PC-3 (cell line): ENCODE measurements at regions of chr4 and their contacts with region 1.

Region 1: DNA sequence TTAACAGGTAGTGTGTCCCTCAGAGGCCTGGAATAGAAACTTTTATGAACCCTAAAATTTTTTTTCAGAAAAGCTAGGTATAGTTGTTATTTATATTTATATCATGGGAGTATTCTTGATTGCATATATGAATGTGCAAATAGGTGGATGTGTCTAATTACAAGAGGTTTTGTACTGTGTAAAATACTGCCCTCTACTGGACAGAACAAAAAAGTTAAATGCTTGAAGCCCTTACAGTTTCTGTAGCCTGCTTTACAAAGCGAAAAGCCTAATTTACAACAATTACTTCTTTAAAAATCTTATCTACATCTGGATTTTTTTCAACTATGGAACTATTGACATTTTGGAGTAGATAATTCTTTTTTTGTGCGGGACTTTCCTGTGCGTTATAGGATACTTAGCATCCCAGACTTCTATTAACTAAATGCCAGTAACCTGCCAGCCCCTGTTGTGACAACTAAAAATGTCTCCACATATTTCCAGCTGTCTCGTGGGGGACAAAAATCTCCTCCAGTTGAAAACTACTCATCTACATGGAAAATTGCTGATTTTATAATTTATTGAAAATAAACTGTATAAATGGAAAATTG is 35.1 kb downstream of the ENPEP start:
- DNase-seq: peak; percentile 70
- ATAC-seq: peak; percentile 59; the same call in 1 of the 2 replicates
- H3K4me3 ChIP-seq: no peak overlapping the region
- H3K27ac ChIP-seq: no peak overlapping the region
- H3K4me1 ChIP-seq: no peaks in the 10 kb centered on the region
- H3K27me3 ChIP-seq: no peaks in the 10 kb centered on the region
- CTCF ChIP-seq: peak; percentile 67

Region 2: DNA sequence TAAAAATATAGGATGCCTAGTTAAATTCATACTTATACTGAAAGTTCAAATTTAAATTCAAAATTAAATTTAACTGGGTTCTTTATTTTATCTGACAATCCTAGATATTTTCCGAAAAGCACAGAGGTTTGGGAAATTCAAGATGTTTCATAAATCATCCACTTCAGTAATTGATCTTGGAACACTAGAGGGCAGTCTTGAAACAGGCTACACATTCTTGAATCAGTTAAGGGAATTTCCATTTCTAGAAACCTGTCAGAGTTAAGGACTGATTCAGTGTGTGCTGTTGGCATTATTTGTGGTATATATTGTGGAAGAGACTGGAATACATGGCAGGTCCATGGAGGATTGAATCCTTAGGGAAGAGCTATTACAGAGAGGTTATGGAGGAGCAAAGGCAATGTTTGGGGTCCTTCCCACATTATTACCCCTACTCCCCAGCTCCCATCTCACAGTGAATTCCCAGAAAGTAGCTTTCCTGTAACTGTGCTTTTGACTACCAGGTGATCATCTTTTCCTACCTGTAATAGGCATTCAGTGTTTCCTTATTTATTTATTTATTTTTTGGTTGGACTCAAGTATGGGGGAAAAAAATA is 505.5 kb before region 1 on chr4:
- CTCF ChIA-PET with region 1: no interaction called
- POLR2A ChIA-PET with region 1: no interaction called
- intact Hi-C with region 1: loop called (anchors 1 kb)
- DNase-seq: peak; percentile 72
- ATAC-seq: peak; percentile 57
- H3K4me3 ChIP-seq: no peak overlapping the region
- H3K27ac ChIP-seq: no peak overlapping the region
- H3K4me1 ChIP-seq: no peaks in the 10 kb centered on the region
- H3K27me3 ChIP-seq: no peaks in the 10 kb centered on the region
- CTCF ChIP-seq: peak; percentile 79

Region 3: DNA sequence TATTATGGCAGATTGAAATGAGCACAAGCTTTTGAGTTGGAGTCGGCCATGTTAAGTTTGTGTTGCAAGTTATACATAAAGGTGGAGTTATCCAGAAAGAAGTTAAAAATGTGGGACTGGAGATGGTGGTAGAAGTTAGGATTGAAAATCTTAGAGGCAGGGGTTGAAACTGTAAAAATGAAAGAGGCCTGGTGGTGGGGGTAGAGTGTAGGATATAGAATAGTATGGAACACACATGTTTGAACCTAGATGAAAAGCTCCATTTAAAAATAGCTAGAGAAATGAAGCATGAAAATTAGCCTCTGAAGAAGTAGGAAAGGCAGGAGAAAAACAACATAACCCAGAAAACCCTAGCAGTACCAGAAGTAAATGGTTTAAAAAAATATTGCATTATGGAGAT is 166.9 kb before region 1 on chr4:
- CTCF ChIA-PET with region 1: interaction called, 9 read pairs
- POLR2A ChIA-PET with region 1: no interaction called
- intact Hi-C with region 1: loop called (anchors 1 kb)
- DNase-seq: peak; percentile 52
- ATAC-seq: no peak
- H3K4me3 ChIP-seq: no peak overlapping the region
- H3K27ac ChIP-seq: no peak overlapping the region
- H3K4me1 ChIP-seq: no peaks in the 10 kb centered on the region
- H3K27me3 ChIP-seq: no peaks in the 10 kb centered on the region
- CTCF ChIP-seq: peak; percentile 60; the same call in 1 of the 2 replicates

Region 4: DNA sequence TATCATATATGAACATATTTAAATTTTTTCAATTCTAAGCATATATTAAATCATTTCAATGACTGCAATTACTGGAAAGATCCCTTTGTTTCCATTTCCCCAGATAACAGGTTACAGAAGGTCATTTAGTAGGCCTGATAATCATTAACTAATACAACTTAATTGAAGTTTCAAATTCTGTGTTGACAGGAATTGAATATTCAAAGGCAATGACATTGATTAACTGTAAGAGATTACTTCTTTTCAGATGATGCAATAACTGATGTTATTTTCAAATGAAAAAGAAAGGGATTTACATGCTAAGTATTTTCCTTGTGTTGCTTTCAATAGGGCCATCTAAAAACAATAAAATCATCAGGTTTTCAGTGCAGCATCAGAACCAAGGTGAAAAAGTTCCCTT is 116.2 kb before region 1 on chr4:
- CTCF ChIA-PET with region 1: no interaction called
- POLR2A ChIA-PET with region 1: no interaction called
- intact Hi-C with region 1: no loop called
- DNase-seq: no peak
- ATAC-seq: no peak
- H3K4me3 ChIP-seq: no peak overlapping the region
- H3K27ac ChIP-seq: no peak overlapping the region
- H3K4me1 ChIP-seq: no peaks in the 10 kb centered on the region
- H3K27me3 ChIP-seq: peaks cover 7% of the 10 kb centered on the region; the same call in 1 of the 2 replicates
- CTCF ChIP-seq: no peak

Region 5: DNA sequence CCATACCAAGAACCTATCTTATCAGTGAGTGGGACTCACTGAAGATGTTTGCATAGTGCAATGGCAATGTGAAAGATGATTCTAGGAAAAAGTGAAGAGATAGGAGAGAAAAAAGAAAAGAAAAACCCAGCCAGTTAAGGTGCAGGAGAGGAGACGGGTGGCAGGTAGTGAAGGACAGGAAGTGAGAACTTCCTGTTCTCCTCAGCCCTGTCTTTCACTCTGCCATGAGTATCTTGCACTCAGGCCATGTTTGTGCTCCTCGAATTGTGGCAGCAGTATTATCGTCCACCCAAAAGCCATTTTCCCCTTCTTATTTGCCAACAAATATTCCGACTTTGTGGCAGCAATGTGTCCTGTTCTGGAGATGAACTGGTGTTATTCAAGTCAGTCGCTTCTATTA is 43.6 kb before region 1 on chr4:
- CTCF ChIA-PET with region 1: no interaction called
- POLR2A ChIA-PET with region 1: no interaction called
- intact Hi-C with region 1: no loop called
- DNase-seq: no peak
- ATAC-seq: no peak
- H3K4me3 ChIP-seq: no peak overlapping the region
- H3K27ac ChIP-seq: no peak overlapping the region
- H3K4me1 ChIP-seq: no peaks in the 10 kb centered on the region
- H3K27me3 ChIP-seq: no peaks in the 10 kb centered on the region
- CTCF ChIP-seq: no peak